ENCODE measurements at regions of chr15 and their contacts with region 1.

Region 1: GRCh38 chr15:59104912-59105732 is at the start of gene CCNB2:
- DNase-seq: peak; percentile 97
- H3K4me3 ChIP-seq: peak within 1 kb of the TSS; percentile 83
- H3K27ac ChIP-seq: peak within 1 kb of the TSS; percentile 96
- H3K4me1 ChIP-seq: peaks cover 7% of the 10 kb centered on the region
- H3K27me3 ChIP-seq: no peaks in the 10 kb centered on the region
- CTCF ChIP-seq: no peak
- total RNA-seq, gene CCNB2: 123 and 129 TPM in 2 replicates

Region 2: DNA sequence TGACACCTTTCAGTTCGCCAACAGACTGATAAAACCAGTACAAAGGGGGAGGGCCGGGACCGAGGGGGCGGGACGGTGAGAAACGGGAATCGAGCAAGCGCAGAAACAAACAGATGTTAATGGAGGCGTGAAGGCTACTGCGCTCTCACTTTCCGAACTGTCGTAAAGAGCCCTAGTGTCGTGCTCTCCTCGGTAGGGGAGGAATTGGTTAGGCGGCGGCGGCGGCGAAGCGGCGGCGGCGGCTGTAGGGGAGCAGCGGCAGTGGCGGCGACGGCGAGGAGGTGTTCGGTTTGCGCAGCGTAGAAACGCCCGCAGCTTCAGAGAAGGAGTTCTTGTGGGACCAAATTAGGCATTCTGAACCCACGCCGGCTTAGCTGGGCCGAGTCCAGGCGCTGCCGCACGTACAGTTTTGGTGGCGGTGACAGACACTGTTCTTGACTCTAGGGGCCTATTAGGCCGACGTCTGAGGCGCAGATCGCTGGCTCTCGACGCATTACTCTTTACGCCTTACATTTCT is 117.6 kb before region 1 on chr15 and contains the start of gene RNF111:
- CTCF ChIA-PET with region 1: no interaction called
- POLR2A ChIA-PET with region 1: no interaction called
- intact Hi-C with region 1: loop called (anchors 10 kb)
- DNase-seq: peak; percentile 95
- H3K4me3 ChIP-seq: peak within 1 kb of the TSS; percentile 73
- H3K27ac ChIP-seq: peak within 1 kb of the TSS; percentile 75
- H3K4me1 ChIP-seq: peaks cover 11% of the 10 kb centered on the region
- H3K27me3 ChIP-seq: no peaks in the 10 kb centered on the region
- CTCF ChIP-seq: no peak
- total RNA-seq, gene RNF111: 30.3 and 34.4 TPM in 2 replicates

Region 3: DNA sequence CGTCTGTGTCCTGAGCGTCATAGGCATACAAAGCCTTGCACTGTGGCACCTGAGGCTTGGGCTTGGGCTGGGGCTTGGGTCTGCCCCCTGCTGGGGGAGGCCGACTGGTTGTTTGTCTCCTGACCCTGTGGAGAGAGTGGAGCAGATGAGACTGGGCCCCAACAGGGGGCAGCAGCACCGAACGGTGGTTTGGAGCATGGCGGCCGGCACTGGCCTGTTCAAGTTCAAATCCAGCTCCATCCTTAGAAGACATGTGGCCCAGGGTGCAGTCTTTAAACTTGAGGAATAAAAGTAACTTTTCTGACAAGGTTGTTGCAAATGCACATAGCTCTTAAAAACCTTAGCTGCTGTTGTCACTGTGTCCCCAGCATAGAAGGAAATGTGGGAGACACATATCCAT is 33.1 kb after region 1 on chr15:
- CTCF ChIA-PET with region 1: no interaction called
- POLR2A ChIA-PET with region 1: interaction called, 41 read pairs
- intact Hi-C with region 1: no loop called
- DNase-seq: peak; percentile 53
- H3K4me3 ChIP-seq: no peak overlapping the region
- H3K27ac ChIP-seq: no peak overlapping the region
- H3K4me1 ChIP-seq: no peaks in the 10 kb centered on the region
- H3K27me3 ChIP-seq: no peaks in the 10 kb centered on the region
- CTCF ChIP-seq: peak; percentile 60

Region 4: DNA sequence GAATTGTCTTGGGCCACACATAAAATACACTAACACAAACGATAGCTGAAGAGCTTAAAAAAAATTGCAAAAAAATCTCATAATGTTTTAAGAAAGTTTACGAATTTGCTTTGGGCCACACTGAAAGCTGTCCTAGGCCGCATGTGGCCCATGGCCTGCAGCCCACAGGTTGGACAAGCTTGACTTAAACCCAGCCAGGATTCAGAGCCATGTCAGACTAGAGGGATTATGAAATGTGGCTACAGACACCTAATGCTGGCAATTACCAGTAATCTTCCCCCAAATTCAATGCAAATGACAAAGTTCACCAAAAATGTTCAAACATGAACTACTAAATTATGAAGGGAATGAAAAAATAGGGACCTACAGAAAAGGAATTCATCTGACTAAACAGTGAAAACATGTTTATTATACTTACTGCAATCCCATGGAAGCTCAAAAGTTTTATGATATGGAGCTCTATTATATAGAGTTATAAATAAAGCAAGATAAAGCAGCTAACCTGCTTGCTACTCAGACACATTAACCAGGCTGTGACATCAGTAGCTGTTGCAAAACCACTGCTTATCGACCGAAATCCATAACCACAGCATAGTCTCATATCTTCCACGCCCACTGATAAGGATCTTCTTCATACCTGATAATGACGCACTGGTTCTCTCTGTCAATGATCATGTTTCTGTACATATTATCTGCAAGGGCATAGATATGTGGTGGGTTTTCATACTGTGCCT is 150.7 kb after region 1 on chr15:
- CTCF ChIA-PET with region 1: no interaction called
- POLR2A ChIA-PET with region 1: no interaction called
- intact Hi-C with region 1: no loop called
- DNase-seq: no peak
- H3K4me3 ChIP-seq: no peak overlapping the region
- H3K27ac ChIP-seq: no peak overlapping the region
- H3K4me1 ChIP-seq: no peaks in the 10 kb centered on the region
- H3K27me3 ChIP-seq: no peaks in the 10 kb centered on the region
- CTCF ChIP-seq: no peak